Activated T-helper 1 cell treated with anti-CD3 and anti-CD28 coated beads, Interleukin-12 subunit alpha, Interleukin-12 subunit beta, Interleukin-2, Interleukin-4 antibody, amounts not matched to agents 30 ng/mL and 10 ng/mL and 1 ng/mL, durations not matched to agents 14 hours and 24 hours and 36 hours (primary cell): ENCODE measurements at regions of chr13 and their contacts with region 1.

Region 1: DNA sequence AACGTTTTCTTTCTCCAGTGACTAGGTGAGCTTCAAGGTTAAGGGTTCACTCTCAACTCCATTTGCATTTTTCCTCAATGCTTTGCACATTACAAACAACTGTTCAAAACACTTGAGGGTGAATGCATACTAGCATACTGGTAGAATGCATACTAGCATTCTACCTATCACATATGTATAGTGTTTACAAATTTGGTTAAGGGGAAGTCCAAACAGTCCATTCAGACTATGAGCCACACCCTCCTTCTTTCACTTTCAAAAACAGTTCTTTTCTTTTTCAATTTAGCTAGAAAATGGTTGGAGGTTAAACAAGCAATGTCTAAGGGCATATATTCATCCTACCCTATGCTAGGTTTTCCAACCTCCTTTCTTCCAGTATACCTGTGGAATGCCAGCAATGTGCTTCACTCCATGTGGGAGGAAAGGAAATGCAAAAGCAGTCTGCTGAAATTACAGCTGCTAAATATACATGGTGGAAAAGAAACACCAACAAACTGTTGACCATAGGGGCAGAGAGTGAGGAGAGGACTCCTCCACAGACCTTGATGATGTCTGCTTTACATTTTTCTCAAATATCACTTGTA is 102.6 kb downstream of the DOCK9 start:
- DNase-seq: no peak
- H3K4me3 Mint-ChIP-seq: peak overlapping the region; percentile 64
- H3K27ac Mint-ChIP-seq: peak overlapping the region; percentile 92
- H3K4me1 Mint-ChIP-seq: peaks cover 62% of the 10 kb centered on the region
- H3K27me3 Mint-ChIP-seq: no peaks in the 10 kb centered on the region

Region 2: GRCh38 chr13:98853771-98854221 is 21.4 kb before region 1 on chr13:
- intact Hi-C with region 1: loop called (anchors 1 kb)
- DNase-seq: peak; percentile 59
- H3K4me3 Mint-ChIP-seq: peak overlapping the region; percentile 36
- H3K27ac Mint-ChIP-seq: peak overlapping the region; percentile 13
- H3K4me1 Mint-ChIP-seq: peaks cover 21% of the 10 kb centered on the region
- H3K27me3 Mint-ChIP-seq: no peaks in the 10 kb centered on the region

Region 3: DNA sequence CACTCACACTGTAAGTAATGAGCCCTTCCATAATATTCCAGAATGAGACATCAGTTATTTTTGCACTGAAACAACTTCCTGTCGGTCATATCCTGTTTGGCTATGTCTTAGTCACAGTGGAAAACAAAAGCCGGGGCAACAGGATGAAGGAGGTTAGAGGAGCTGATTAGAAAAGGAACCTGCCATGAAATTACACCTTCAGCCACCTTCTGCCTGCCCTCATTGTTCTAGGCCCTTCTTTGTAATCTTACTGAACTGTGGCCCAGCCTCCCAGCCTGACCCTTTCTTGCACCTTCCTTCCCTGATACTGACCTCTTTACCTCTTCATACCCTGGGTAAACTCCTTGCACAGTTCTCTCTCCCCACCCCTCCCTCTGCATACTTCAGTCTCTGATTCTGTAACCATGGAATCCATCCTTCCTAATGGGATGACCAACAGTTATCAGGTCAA is 35.3 kb after region 1 on chr13:
- intact Hi-C with region 1: loop called (anchors 1 kb)
- DNase-seq: peak; percentile 49
- H3K4me3 Mint-ChIP-seq: peak overlapping the region; percentile 35
- H3K27ac Mint-ChIP-seq: peak overlapping the region; percentile 97
- H3K4me1 Mint-ChIP-seq: peaks cover 56% of the 10 kb centered on the region
- H3K27me3 Mint-ChIP-seq: no peaks in the 10 kb centered on the region

Region 4: DNA sequence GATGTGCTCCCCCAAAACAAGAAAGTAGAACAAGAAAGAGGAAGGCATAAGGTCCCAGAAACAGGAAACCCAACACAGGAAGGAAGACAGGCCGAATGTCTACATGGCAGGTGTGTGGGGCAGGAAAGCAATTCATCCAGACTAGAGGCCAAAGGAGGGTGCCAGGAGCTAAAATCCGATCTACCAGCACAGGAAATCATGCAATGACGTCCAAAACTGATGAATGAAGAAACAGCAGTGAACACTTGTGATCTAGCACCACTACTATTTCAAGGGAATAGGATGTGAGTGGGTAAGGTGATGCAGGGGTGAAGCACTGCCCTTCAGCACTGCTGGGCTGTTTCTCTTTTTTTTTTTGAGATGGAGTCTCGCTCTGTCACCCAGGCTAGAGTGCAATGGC is 43.5 kb after region 1 on chr13:
- intact Hi-C with region 1: loop called (anchors 2 kb)
- DNase-seq: no peak
- H3K4me3 Mint-ChIP-seq: no peak overlapping the region
- H3K27ac Mint-ChIP-seq: peak overlapping the region; percentile 76
- H3K4me1 Mint-ChIP-seq: peaks cover 40% of the 10 kb centered on the region
- H3K27me3 Mint-ChIP-seq: no peaks in the 10 kb centered on the region

Region 5: DNA sequence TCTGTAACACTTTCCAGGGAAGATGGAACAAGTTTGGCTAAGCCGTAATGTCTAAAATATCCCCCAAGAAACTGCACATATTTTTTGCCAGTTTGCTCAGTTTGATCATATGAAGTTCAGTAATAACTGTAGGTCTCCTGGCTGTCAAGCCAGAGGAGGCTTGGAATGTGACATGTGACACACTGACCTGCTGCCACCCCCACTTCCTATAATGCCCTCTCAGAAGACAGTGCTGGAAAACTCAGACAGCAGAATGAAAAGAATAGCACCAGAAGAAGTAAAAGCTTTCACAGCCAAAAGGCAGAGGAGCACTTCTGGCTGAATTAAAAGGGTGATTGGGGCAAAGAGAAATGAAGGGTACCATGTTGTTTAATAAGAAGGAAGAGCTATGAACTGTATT is 258.0 kb after region 1 on chr13:
- intact Hi-C with region 1: no loop called
- DNase-seq: no peak
- H3K4me3 Mint-ChIP-seq: no peak overlapping the region
- H3K27ac Mint-ChIP-seq: no peak overlapping the region
- H3K4me1 Mint-ChIP-seq: no peaks in the 10 kb centered on the region
- H3K27me3 Mint-ChIP-seq: peaks cover 10% of the 10 kb centered on the region